ENCODE measurements at regions of chr9 and their contacts with region 1.

Region 1: DNA sequence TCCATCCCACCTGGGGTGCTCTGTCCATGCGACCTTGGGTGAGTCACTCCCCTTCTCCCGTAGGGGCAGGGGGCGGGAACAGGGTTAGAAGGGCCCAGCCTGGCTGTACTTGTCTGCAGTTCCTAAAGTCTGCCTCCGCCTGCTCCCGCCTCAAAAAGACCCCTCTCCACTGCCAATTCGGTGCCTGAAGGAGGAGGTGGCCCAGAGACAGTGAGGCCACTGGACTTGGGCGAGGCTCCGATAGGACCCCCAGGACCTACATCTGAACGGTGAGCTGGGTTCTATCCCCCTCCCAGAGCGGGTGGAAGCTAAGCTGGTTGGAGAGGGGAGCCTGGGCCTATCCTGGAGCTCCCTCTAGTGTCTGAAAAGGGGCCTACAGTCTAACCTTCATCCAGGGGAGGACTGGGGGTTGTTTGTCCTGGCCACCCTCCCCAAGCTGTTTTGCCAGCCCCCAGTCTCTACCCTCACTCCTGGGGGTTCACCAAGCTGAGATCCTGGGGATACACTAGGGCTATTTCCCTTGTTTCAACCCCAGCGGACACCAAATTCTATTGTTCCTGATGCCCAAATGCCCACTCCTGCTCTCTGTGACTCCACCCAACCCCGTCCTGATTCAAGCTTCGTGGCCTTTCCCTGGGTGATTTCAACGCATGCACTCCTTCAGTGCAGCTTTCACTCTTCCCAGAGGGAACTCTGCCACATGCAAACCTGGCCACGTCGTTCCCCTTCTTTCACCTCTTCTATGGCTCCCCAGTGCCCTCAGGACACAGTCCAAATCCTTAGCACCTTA is 6.1 kb upstream of the CRB2 start:
- ATAC-seq: peak; percentile 67 to 88 (median 77)
- H3K4me3 ChIP-seq: no peak overlapping the region
- H3K27ac ChIP-seq: no peak overlapping the region
- H3K4me1 ChIP-seq: peaks cover 0 to 2% of the 10 kb centered on the region in 2 donors

Region 2: GRCh38 chr9:122464633-122465567 is 885.0 kb before region 1 on chr9:
- in situ Hi-C with region 1: loop called in 1 of 9 experiments (anchors 25 kb)
- ATAC-seq: peak in 6 of 8 experiments; percentile 40 to 97 (median 71)
- H3K4me3 ChIP-seq: no peak overlapping the region
- H3K27ac ChIP-seq: no peak overlapping the region
- H3K4me1 ChIP-seq: no peaks in the 10 kb centered on the region

Region 3: GRCh38 chr9:123081824-123082223 is 268.1 kb before region 1 on chr9:
- in situ Hi-C with region 1: loop called in 5 of 9 experiments (anchors 10 to 25 kb)
- ATAC-seq: peak in 4 of 8 experiments; percentile 28 to 77 (median 72)
- H3K4me3 ChIP-seq: no peak overlapping the region
- H3K27ac ChIP-seq: no peak overlapping the region
- H3K4me1 ChIP-seq: no peaks in the 10 kb centered on the region